ENCODE measurements at regions of chr18 and their contacts with region 1.

Region 1: DNA sequence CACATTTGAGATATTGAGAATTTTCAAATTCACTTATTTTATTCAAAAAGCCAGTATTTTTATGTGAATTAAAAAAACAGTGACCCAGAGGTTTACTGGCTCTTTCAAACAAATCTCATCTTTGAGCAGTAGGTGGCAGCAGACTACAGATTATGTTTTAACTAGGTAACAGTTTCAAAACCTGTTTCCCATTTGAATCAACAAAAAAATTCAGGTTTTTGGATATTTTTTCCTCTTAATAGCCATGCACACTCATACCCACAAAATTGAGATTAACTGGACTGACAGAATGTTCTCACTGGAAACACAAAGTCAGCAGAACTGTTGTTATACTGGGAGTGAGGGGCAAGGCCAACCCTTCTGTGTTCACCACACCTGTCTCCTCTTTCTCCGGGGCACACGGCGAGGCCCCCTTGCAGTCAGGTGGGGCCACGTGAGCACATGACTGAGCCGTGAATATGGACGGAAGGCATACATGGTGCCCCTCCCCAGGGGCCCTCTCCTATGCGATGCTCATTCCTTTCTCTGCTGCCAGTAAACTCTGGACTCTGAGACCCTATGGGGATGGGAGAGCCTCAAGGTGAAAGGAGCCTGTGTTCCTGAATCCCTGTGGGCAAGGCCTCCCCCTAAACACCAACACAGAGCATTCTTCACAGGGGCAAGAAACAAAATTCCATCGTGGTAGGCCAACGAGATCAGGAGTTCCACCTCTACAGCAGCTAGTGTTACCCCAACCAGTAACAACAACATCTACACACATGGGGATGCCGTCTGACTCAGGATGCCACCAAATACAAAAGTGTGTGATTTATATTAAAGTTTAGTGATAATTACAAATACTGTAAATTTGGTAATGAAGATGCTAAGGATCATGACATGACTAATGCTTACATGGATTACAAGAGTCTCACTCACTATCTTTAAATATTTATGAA is 80.4 kb downstream of the LPIN2 start:
- DNase-seq: no peak
- H3K4me3 ChIP-seq: no peak overlapping the region
- CTCF ChIP-seq: peak; percentile 46

Region 2: DNA sequence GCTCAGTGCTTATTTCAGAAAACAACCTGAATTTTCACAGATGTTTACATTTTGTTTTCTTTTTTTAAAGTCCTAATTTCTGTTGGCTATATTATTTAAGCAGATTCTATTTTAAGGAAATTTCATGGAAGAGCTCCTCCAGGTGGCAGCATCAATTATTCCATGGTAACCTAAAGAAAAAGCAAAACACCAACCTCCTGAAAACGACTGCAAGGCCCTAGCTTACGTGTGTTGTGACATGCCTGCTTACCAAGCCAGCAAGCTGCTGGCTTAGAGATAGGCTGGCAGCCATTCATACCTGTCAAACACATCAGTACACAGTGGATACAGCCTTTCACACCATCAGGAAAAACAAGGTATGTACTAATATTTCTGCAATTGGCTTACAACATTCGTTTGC is 15.5 kb after region 1 on chr18:
- CTCF ChIA-PET with region 1: interaction called, 24 read pairs
- POLR2A ChIA-PET with region 1: no interaction called
- DNase-seq: peak; percentile 16
- H3K4me3 ChIP-seq: no peak overlapping the region
- CTCF ChIP-seq: peak; percentile 16

Region 3: DNA sequence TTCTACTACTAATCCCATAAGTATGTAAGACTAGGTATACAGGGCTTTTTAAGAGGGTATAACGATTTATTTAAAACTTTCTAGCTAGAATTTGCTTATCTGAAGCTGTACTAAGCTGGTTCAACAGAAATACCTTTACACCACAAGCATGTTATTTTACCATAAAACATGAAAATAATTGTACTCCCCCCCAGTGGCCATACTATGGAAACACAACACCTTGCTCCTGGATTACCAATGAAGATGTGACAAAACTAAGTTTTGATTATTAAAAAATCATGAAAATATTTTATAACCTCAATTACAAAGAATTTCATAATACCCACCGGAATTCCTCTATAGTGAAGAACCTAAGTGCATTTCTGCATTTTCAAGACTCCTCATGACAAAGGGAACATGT is 53.1 kb after region 1 on chr18:
- CTCF ChIA-PET with region 1: interaction called, 17 read pairs
- POLR2A ChIA-PET with region 1: no interaction called
- DNase-seq: no peak
- H3K4me3 ChIP-seq: no peak overlapping the region
- CTCF ChIP-seq: no peak

Region 4: GRCh38 chr18:3151399-3152264 is 219.1 kb after region 1 on chr18:
- CTCF ChIA-PET with region 1: interaction called, 27 read pairs
- POLR2A ChIA-PET with region 1: no interaction called
- DNase-seq: no peak
- H3K4me3 ChIP-seq: no peak overlapping the region
- CTCF ChIP-seq: peak; percentile 52

Region 5: DNA sequence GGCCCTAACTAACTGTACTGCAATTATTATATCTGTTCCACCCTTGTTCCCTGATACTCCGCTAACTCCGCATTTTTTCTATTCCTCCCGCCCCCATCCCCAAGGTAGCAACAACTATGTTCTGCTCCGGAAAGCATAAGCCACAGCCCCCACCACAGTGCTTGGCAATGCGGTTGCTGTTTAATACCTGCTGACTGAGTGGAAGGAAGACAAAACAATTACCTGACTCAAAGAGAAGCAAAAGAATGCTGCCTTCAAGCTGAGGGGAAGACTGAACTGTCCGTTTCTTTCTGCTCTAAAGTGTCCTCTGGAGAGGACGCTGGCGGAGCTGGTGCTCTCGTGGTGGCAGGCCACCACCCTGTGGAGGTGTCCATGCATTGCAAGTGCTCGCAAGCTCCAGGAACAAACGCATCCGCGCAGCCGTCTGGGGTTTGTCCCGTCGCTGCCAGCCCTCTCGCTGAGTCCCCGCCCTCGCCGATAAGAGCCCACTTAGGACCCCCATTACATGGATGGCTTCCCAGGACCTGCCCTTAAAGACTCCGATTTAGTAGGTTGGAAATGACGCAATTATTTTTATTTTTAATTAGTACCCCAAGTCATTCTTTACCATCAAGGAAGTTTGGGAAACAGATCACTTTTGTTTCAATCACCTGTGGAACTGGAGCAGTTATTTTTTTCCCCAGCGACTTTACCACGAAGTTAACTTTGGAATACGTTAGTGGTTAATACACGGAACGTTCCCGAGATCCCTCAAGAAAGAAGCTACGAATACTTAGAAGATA is 313.5 kb after region 1 on chr18:
- CTCF ChIA-PET with region 1: interaction called, 66 read pairs
- POLR2A ChIA-PET with region 1: no interaction called
- DNase-seq: no peak
- H3K4me3 ChIP-seq: peak overlapping the region; percentile 44
- CTCF ChIP-seq: peak; percentile 89

Measured in AG04449 (cell line).